ENCODE measurements at regions of chr1 and their contacts with region 1.

Region 1: DNA sequence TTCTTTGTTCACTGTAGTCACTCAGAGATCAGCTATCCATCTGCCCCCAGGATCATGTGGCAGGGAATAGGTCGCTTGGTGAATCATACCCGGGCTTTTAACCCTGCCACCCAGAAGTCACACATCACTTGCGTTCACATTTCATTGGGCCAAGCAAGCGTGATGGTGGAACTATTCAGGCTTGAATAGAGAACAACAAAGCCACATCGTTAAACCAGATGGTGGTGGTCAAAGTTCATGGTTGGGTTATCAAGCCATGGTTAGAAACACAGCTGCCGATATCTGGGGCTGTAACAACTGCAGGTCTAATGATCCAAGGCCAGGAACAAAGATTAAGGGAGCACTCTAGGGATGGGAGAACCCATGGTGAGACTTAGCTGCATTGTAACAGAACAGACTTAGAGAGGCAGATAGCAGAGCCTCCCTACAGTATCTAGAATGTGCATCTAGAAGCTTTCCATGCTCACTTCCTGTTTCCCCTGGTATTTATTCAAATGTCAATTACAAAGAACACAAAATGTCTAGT is 40.0 kb upstream of the PTPRC start:
- DNase-seq: peak in 3 of 4 experiments; percentile 19 to 81 (median 63)
- ATAC-seq: peak; percentile 78
- H3K4me3 ChIP-seq: no peak overlapping the region
- H3K27ac ChIP-seq: peak overlapping the region; percentile 72
- H3K4me1 ChIP-seq: peaks cover 6 to 44% of the 10 kb centered on the region in 2 experiments; a peak in 3 of 5 replicates
- H3K27me3 ChIP-seq: no peaks in the 10 kb centered on the region
- CTCF ChIP-seq: no peak
- EP300 ChIP-seq: peak; percentile 80; the same call in 1 of the 2 replicates
- POLR2A ChIP-seq: 0 out of 2 replicates have a peak, but pooled peaks have one; percentile 31
- RAD21 ChIP-seq: peak in 1 of 2 experiments; percentile 38; a peak in 1 of 4 replicates

Region 2: GRCh38 chr1:198520524-198521254 is 78.2 kb before region 1 on chr1:
- CTCF ChIA-PET with region 1: no interaction called
- POLR2A ChIA-PET with region 1: no interaction called
- in situ Hi-C with region 1: no loop called
- intact Hi-C with region 1: loop called (anchors 5 kb)
- DNase-seq: no peak
- ATAC-seq: no peak
- H3K4me3 ChIP-seq: no peak overlapping the region
- H3K27ac ChIP-seq: no peak overlapping the region
- H3K4me1 ChIP-seq: peaks cover 0 to 8% of the 10 kb centered on the region in 2 experiments; a peak in 2 of 5 replicates
- H3K27me3 ChIP-seq: no peaks in the 10 kb centered on the region
- CTCF ChIP-seq: no peak
- EP300 ChIP-seq: no peak
- POLR2A ChIP-seq: no peak
- RAD21 ChIP-seq: no peak

Region 3: DNA sequence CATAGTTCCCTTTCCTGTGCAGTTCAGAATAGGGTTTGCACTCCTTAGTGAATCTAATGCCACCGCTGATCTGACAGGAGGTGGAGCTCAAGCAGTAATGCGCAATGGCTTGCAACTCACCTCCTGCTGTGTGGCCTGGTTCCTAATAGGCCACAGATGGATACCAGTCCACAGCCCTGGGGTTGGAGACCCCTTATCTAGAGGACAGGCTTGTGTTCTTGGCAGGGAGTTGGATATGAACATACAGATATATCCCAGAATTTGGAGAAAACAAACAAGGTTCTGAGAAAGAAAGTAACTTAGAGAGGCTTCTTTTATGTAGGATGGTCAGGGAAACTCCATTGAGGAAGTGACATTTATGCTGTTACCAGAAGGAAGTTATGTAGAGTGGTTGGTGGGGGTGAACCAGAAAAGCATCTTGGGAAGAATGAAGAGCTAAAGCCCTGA is 34.8 kb after region 1 on chr1:
- CTCF ChIA-PET with region 1: no interaction called
- POLR2A ChIA-PET with region 1: interaction called, 3 read pairs
- in situ Hi-C with region 1: no loop called
- intact Hi-C with region 1: loop called (anchors 1 kb)
- DNase-seq: peak in 2 of 4 experiments; percentile 64 to 86
- ATAC-seq: peak; percentile 80
- H3K4me3 ChIP-seq: no peak overlapping the region
- H3K27ac ChIP-seq: peak overlapping the region; percentile 61
- H3K4me1 ChIP-seq: peaks cover 7 to 22% of the 10 kb centered on the region in 2 experiments; a peak in 2 of 5 replicates
- H3K27me3 ChIP-seq: no peaks in the 10 kb centered on the region
- CTCF ChIP-seq: no peak; a peak in 1 of 6 replicates
- EP300 ChIP-seq: peak; percentile 90
- POLR2A ChIP-seq: no peak
- RAD21 ChIP-seq: peak; percentile 44 to 54